ENCODE measurements at regions of chr1 and their contacts with region 1.

Region 1: GRCh38 chr1:175481126-175482066 is 262.0 kb downstream of the TNR start:
- DNase-seq: no peak
- ATAC-seq: peak; percentile 50
- H3K4me3 Mint-ChIP-seq: no peak overlapping the region
- H3K27ac Mint-ChIP-seq: no peak overlapping the region
- H3K4me1 Mint-ChIP-seq: peaks cover 2% of the 10 kb centered on the region
- H3K27me3 Mint-ChIP-seq: peaks cover 4% of the 10 kb centered on the region
- CTCF ChIP-seq: no peak

Region 2: GRCh38 chr1:175708788-175709187 is 227.4 kb after region 1 on chr1:
- CTCF ChIA-PET with region 1: interaction called, 3 read pairs
- POLR2A ChIA-PET with region 1: no interaction called
- intact Hi-C with region 1: loop called (anchors 1 kb)
- DNase-seq: no peak
- ATAC-seq: no peak
- H3K4me3 Mint-ChIP-seq: no peak overlapping the region
- H3K27ac Mint-ChIP-seq: no peak overlapping the region
- H3K4me1 Mint-ChIP-seq: no peaks in the 10 kb centered on the region
- H3K27me3 Mint-ChIP-seq: peaks cover 2% of the 10 kb centered on the region
- CTCF ChIP-seq: no peak

Region 3: GRCh38 chr1:175757381-175758015 is 276.1 kb after region 1 on chr1:
- CTCF ChIA-PET with region 1: no interaction called
- POLR2A ChIA-PET with region 1: no interaction called
- intact Hi-C with region 1: loop called (anchors 1 kb)
- DNase-seq: no peak
- ATAC-seq: peak; percentile 52
- H3K4me3 Mint-ChIP-seq: no peak overlapping the region
- H3K27ac Mint-ChIP-seq: no peak overlapping the region
- H3K4me1 Mint-ChIP-seq: no peaks in the 10 kb centered on the region
- H3K27me3 Mint-ChIP-seq: peaks cover 4% of the 10 kb centered on the region
- CTCF ChIP-seq: no peak

Region 4: GRCh38 chr1:176073524-176074157 is 592.2 kb after region 1 on chr1:
- CTCF ChIA-PET with region 1: no interaction called
- POLR2A ChIA-PET with region 1: no interaction called
- intact Hi-C with region 1: loop called (anchors 1 kb)
- DNase-seq: no peak
- ATAC-seq: no peak
- H3K4me3 Mint-ChIP-seq: no peak overlapping the region
- H3K27ac Mint-ChIP-seq: no peak overlapping the region
- H3K4me1 Mint-ChIP-seq: peaks cover 7% of the 10 kb centered on the region
- H3K27me3 Mint-ChIP-seq: no peaks in the 10 kb centered on the region
- CTCF ChIP-seq: no peak